ENCODE measurements at regions of chr9 and their contacts with region 1.

Region 1: GRCh38 chr9:83707768-83708514 is at the start of gene UBQLN1:
- DNase-seq: peak; percentile 95 to 97
- ATAC-seq: peak; percentile 89 to 90
- H3K4me3 ChIP-seq: peak within 1 kb of the TSS; percentile 76
- H3K27ac ChIP-seq: peak within 1 kb of the TSS; percentile 94 to 100
- H3K4me1 ChIP-seq: peaks cover 11% of the 10 kb centered on the region; the same call in 1 of the 3 replicates
- CTCF ChIP-seq: no peak
- EP300 ChIP-seq: no peak
- POLR2A ChIP-seq: peak; percentile 96
- RAD21 ChIP-seq: no peak
- polyA plus RNA-seq, gene UBQLN1: 187 and 220 TPM in 2 replicates

Region 2: DNA sequence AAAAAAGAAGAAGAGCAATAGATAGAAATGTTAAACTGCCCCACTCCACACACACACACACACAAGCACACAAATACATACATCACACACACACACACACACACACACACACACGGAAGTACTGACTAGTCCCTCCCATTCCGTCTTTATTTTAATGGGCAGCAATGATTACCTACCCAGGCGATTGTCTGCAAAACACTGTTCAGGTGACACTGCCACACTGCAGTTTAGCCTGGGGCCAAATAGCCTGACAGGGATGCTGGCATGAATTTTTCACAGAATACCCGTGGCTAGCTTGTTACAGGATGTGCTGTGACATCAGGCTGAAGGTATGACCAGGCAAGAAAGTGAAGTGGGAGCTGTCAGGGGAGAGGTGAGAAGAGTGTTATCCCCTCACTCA is 256.6 kb before region 1 on chr9:
- CTCF ChIA-PET with region 1: no interaction called
- POLR2A ChIA-PET with region 1: no interaction called
- DNase-seq: no peak
- ATAC-seq: no peak
- H3K4me3 ChIP-seq: no peak overlapping the region
- H3K27ac ChIP-seq: no peak overlapping the region
- H3K4me1 ChIP-seq: no peaks in the 10 kb centered on the region
- CTCF ChIP-seq: no peak
- EP300 ChIP-seq: no peak
- POLR2A ChIP-seq: no peak
- RAD21 ChIP-seq: no peak

Region 3: GRCh38 chr9:83800201-83801033 is 92.5 kb after region 1 on chr9:
- CTCF ChIA-PET with region 1: no interaction called
- POLR2A ChIA-PET with region 1: interaction called, 11 read pairs
- DNase-seq: peak in 1 of 2 experiments; percentile 6
- ATAC-seq: no peak
- H3K4me3 ChIP-seq: no peak overlapping the region
- H3K27ac ChIP-seq: no peak overlapping the region
- H3K4me1 ChIP-seq: 0 out of 3 replicates have a peak, but pooled peaks cover 3% of the 10 kb centered on the region
- CTCF ChIP-seq: no peak
- EP300 ChIP-seq: no peak
- POLR2A ChIP-seq: no peak
- RAD21 ChIP-seq: no peak

Region 4: GRCh38 chr9:83920927-83921707 is 213.2 kb after region 1 on chr9 and contains the start of gene KIF27:
- CTCF ChIA-PET with region 1: no interaction called
- POLR2A ChIA-PET with region 1: interaction called, 12 read pairs
- DNase-seq: peak; percentile 88 to 98
- ATAC-seq: peak; percentile 90 to 97
- H3K4me3 ChIP-seq: peak within 1 kb of the TSS; percentile 81
- H3K27ac ChIP-seq: peak within 1 kb of the TSS; percentile 93 to 97
- H3K4me1 ChIP-seq: peaks cover 7% of the 10 kb centered on the region; the same call in 2 of the 3 replicates
- CTCF ChIP-seq: peak; percentile 50
- EP300 ChIP-seq: no peak
- POLR2A ChIP-seq: peak; percentile 85
- RAD21 ChIP-seq: no peak; a peak in 3 of 5 replicates
- polyA plus RNA-seq, gene KIF27: 4.1 and 6.0 TPM in 2 replicates